Stomach (tissue), 19 donors: ENCODE measurements at regions of chr16 and their contacts with region 1.

Region 1: DNA sequence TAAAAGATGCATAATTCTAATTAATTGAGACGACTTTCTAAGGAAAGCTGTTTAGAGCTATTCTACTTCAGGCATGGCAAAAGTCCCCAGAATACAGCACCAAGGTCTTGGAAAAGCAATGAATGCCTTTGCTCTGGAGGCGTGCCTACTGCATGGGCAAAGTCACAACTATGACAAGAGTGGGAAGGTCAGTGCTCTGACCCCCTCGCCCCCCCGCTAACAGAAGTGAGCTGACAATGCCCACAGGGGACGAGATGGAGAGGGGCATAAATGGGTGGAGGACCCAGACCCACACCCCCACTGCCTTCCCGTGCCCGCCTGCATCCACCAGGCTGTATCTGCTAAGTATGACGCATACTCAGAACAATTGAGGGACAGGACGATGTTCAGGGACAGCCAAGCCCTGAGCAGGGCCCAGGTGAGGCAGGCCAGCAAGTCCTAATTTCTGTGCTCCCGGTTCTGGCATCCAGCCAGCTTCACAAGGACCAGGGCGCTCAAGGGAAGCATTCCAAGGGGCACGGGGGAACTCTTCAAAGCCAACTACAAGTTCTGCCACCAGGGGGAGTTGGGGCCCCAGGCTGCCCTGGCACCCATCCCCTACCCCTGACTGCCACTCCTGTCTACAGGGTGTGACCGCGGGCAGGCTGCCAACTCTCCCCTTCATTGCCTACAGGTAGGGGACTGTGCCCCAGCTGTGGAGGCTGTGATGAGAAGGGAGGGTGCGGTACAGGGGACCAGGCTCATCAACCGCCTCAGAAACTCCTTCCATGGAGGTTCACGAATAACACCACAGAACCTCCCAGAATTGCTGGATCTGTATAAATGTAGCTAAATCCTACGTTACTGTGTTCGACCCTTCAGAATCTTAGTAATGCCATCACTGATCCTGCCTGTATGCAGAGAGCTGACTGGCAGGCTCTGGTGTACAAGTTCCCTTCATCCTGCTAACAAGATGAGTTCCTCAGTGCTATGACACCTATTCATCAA is 20.8 kb downstream of the NPRL3 start:
- DNase-seq: peak; percentile 73 to 88
- H3K4me3 ChIP-seq: no peak overlapping the region
- H3K27ac ChIP-seq: no peak overlapping the region
- H3K4me1 ChIP-seq: peaks cover 0 to 12% (median 0%) of the 10 kb centered on the region in 4 donors
- H3K27me3 ChIP-seq: no peaks in the 10 kb centered on the region
- CTCF ChIP-seq: peak in 5 of 7 experiments; percentile 40 to 68 (median 66)
- EP300 ChIP-seq: no peak
- POLR2A ChIP-seq: no peak

Region 2: GRCh38 chr16:180938-181667 is 63.4 kb after region 1 on chr16:
- intact Hi-C with region 1: loop called (anchors 5 kb)
- DNase-seq: peak; percentile 84 to 91
- H3K4me3 ChIP-seq: peak overlapping the region; percentile 18 to 49 (median 28)
- H3K27ac ChIP-seq: no peak overlapping the region
- H3K4me1 ChIP-seq: peaks cover 18 to 37% (median 26%) of the 10 kb centered on the region in 4 donors
- H3K27me3 ChIP-seq: peaks cover 23 to 50% (median 46%) of the 10 kb centered on the region in 3 donors
- CTCF ChIP-seq: peak in 5 of 7 experiments; percentile 84 to 98 (median 90)
- EP300 ChIP-seq: no peak
- POLR2A ChIP-seq: no peak